Left colon (tissue), 2 donors: ENCODE measurements at regions of chr6 and their contacts with region 1.

Region 1: GRCh38 chr6:29834564-29835436 is 7.2 kb downstream of the HLA-G start:
- DNase-seq: peak in 1 of 2 donors; percentile 28
- ATAC-seq: peak; percentile 53

Region 2: GRCh38 chr6:29705389-29706231 is 129.2 kb before region 1 on chr6:
- intact Hi-C with region 1: loop called (anchors 10 kb)
- DNase-seq: no peak
- ATAC-seq: peak; percentile 81

Region 3: DNA sequence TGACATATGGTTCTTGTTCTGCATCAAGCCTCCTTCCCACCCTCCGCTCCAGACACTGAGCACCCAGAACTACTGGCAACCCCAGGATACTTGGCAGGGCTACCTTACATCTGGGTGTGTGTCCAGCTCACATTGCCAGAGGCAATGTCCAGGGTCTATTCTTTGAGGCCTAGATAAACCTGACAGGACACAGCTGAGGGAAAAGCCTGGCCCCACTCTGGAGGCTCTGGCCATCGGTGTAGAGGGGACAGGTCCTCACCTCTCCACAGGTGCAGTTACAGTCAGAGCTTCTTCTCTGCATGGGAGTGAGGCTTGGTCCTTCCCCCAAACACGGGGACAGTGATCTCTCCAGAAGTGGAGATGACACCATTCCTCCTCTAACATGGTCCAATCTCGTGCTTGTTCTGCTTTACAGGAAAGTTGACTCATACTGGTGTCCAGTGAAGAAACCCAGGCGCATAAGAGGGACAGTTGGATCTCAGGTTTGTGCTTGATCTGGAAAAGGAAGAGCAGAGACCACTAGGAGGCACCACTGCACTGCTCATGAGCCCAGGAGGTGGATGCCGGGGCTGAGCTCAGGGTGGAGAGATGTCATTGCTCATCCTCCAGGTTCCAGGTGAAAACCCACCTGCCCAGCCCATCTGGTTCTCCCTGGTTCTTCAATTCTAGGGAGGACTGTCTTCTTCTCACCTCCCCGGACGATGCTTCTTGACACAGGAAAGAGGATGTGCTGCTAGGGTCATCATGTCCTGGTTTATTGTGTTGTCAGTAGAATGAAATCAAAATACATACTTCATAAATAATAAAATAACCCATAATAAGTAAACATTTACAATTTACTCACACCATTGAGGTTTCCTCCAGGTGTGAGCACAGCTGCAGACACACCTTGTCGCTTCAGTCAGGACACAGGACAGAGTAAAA is 96.8 kb before region 1 on chr6:
- intact Hi-C with region 1: loop called in 1 of 2 experiments (anchors 10 kb)
- DNase-seq: peak; percentile 60 to 81
- ATAC-seq: peak; percentile 95